ENCODE measurements at regions of chr11 and their contacts with region 1.

Region 1: DNA sequence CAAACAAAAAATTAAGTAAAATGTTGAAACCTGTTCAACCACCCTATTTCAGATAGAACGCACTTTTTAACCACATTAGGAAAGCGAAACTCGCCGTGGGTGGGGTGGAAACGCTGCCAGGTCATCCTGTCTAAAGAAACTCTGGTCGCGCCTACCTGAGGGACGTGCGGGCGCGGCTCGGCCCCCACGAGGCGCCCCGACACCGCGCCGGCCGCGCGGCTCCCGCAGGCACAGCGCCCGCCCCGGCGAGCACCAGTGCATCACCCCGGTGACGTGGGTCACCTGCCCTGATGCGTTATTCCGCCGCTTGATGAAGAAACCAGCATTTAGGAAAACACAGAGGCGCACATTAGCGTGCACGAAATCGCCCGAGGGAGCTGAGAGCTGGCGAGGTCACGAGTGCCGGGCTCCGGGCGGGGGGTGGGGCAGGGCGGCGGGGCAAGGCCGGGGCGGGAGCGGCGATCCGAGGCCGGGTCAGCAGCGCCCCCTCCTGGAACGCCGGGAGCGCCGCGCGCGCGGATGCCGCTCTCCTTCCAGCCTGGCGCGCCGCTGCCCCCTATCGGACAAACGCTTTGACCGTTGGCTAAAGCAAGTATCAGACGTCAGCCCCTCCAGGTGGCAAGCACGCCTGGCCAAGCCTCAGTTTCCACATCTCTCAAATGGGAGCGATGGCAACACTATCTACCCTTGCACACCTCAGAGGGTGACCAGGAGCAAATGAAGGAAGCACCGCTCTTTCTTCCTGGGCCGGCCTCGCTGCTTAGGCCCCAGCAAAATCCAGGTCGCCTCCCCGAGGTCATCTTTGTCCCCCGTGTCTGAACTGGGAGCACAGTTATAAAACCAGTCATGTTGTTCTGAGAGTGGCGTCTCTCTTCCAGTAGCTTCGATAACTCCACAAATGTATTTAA is 15.7 kb upstream of the SNX32 start:
- DNase-seq: peak; percentile 76
- ATAC-seq: peak; percentile 94
- H3K4me3 ChIP-seq: peak overlapping the region; percentile 51 to 65
- H3K27ac ChIP-seq: peak overlapping the region; percentile 51; the same call in 1 of the 2 replicates
- H3K4me1 ChIP-seq: peaks cover 0 to 12% of the 10 kb centered on the region in 2 experiments; a peak in 2 of 4 replicates
- H3K27me3 ChIP-seq: no peaks in the 10 kb centered on the region
- CTCF ChIP-seq: peak; percentile 88 to 99 (median 97)
- POLR2A ChIP-seq: no peak
- RAD21 ChIP-seq: peak; percentile 96

Region 2: GRCh38 chr11:65743928-65744698 is 74.0 kb before region 1 on chr11:
- CTCF ChIA-PET with region 1: interaction called, 8 read pairs
- POLR2A ChIA-PET with region 1: no interaction called
- RAD21 ChIA-PET with region 1: no interaction called
- intact Hi-C with region 1: loop called (anchors 1 kb)
- DNase-seq: peak; percentile 62
- ATAC-seq: peak; percentile 98
- H3K4me3 ChIP-seq: no peak overlapping the region
- H3K27ac ChIP-seq: no peak overlapping the region
- H3K4me1 ChIP-seq: peaks cover 0 to 12% of the 10 kb centered on the region in 2 experiments; a peak in 2 of 4 replicates
- H3K27me3 ChIP-seq: no peaks in the 10 kb centered on the region
- CTCF ChIP-seq: peak; percentile 58 to 97 (median 59)
- POLR2A ChIP-seq: peak; percentile 31
- RAD21 ChIP-seq: peak; percentile 83

Region 3: DNA sequence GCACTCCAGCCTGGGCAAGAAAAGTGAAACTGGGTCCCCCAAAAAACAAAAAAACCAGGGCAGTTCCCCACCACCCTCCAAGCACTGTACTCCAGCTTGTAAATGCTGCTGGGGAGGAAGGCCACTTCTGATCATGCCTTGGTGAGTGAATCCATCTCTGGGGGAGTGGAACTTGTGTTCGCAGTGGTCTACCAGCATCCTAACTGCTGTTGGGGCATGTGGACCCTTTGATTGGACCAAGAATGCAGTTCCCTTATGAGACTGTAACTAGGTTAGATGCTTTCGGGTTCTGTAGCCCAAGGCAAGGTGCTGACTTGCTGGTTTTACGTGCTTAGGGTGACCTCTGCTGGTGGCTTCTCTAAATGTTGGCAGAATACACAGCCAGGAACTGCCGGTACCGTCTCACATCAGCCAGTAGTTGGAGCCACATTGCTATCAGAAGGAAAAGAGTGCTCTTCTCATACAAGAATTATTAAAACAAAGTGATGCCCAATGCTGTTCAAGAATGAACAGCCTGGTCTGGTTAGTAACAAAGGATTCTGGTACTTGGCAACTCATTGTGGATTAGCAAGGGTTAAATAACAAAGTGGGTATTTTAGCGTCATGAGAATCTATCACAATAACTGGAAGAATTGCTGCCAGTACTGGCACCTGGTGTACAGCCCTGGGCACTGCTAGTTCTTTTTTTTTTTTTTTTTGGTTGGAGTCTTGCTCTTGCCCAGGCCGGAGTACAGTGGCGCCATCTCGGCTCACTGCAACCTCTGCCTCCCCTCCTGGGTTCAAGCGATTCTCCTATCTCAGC is 170.9 kb after region 1 on chr11:
- CTCF ChIA-PET with region 1: no interaction called
- POLR2A ChIA-PET with region 1: no interaction called
- RAD21 ChIA-PET with region 1: no interaction called
- intact Hi-C with region 1: loop called (anchors 1 kb)
- DNase-seq: peak; percentile 95
- ATAC-seq: peak; percentile 98
- H3K4me3 ChIP-seq: no peak overlapping the region
- H3K27ac ChIP-seq: peak overlapping the region; percentile 39
- H3K4me1 ChIP-seq: peaks cover 0 to 8% of the 10 kb centered on the region in 2 experiments; a peak in 2 of 4 replicates
- H3K27me3 ChIP-seq: no peaks in the 10 kb centered on the region
- CTCF ChIP-seq: peak; percentile 88 to 100 (median 99)
- POLR2A ChIP-seq: no peak
- RAD21 ChIP-seq: peak; percentile 100

Region 4: DNA sequence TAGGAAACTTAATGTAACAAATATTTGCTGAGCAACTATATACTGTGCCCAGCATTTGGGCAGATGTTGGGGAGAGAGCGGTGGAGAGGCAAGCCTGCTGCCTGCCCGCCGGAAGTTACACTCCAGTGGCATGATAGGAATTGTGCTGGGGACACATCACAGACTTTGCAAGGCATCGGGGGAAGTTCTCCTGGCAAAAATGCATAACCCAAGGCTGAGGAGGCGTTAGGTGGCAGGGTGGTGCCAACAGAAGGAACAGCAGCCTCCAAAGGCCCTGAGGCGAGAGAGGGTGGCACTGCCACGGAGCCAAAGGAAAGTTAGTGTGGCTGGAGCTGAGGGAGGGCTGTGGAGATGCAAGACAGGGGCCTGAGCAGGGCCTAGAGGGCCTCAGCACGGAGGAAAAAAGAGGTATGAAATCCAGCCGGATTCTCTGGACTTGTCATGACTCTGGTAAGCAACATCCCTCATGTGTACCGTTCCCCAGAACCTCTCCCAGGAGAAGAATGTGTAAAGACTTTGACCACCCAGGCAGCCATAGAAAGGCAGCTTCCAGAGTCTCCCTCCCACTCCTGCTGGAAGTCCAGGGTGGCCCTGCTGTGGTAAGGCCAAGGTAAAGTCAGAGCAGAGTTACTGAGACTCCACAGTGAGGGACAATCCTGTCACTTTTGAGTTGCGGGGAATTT is 374.2 kb after region 1 on chr11:
- CTCF ChIA-PET with region 1: no interaction called
- POLR2A ChIA-PET with region 1: no interaction called
- RAD21 ChIA-PET with region 1: no interaction called
- intact Hi-C with region 1: no loop called
- DNase-seq: no peak
- ATAC-seq: no peak
- H3K4me3 ChIP-seq: no peak overlapping the region
- H3K27ac ChIP-seq: no peak overlapping the region; the same call in 1 of the 2 replicates
- H3K4me1 ChIP-seq: peaks cover 14 to 29% of the 10 kb centered on the region in 2 experiments; a peak in 3 of 4 replicates
- H3K27me3 ChIP-seq: no peaks in the 10 kb centered on the region
- CTCF ChIP-seq: no peak
- POLR2A ChIP-seq: no peak
- RAD21 ChIP-seq: no peak